Activated naive CD4-positive, alpha-beta T cell treated with anti-CD3 and anti-CD28 coated beads for 36 hours (primary cell): ENCODE measurements at regions of chr5 and their contacts with region 1.

Region 1: GRCh38 chr5:174581479-174581878 is 142.9 kb upstream of the MSX2 start:
- DNase-seq: no peak
- H3K4me3 Mint-ChIP-seq: no peak overlapping the region
- H3K27ac Mint-ChIP-seq: no peak overlapping the region
- H3K4me1 Mint-ChIP-seq: no peaks in the 10 kb centered on the region
- H3K27me3 Mint-ChIP-seq: no peaks in the 10 kb centered on the region

Region 2: DNA sequence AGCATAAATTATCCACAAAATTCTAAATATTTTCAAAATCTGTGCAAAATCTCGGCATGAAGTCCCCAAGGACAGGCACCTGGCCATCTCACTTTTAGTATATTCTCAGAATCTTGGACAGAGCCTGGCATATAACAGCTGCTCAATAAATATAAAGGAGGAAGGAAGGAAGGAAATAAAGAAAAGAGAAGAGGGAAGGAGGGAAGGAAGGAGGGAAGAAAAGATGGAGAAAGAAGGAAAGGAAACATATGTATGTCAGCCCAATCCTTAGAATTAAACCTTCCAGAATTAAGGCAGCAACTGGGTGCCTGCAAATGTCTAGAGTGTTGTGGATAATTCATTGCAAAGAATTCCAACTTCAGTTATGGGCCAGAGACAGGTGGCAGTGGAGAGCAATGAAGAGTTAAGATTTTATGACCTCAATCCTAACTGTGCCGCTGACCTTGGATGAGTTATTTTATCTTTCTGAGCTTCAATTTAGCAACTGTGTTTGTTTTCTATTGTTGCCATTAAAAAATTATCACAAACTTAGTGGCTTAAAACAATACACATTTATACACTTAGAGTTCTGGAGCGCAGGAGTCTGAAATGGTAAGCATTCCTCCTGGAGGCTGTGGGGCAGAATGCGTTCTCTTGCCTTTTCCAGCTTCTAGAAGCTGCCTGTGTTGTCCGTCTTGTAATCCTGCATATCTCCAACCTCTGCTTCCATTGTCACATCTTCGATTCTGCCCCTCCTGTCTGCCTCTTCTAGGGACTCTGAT is 58.0 kb before region 1 on chr5:
- CTCF ChIA-PET with region 1: no interaction called
- intact Hi-C with region 1: loop called (anchors 2 kb)
- DNase-seq: no peak
- H3K4me3 Mint-ChIP-seq: no peak overlapping the region
- H3K27ac Mint-ChIP-seq: no peak overlapping the region
- H3K4me1 Mint-ChIP-seq: no peaks in the 10 kb centered on the region
- H3K27me3 Mint-ChIP-seq: peaks cover 12% of the 10 kb centered on the region